Thyroid gland (tissue), 4 donors: ENCODE measurements at regions of chr3 and their contacts with region 1.

Region 1: GRCh38 chr3:49339945-49340800 is at the start of gene USP4:
- DNase-seq: peak; percentile 93 to 95
- H3K4me3 ChIP-seq: peak within 1 kb of the TSS; percentile 60 to 90 (median 86)
- H3K27ac ChIP-seq: peak within 1 kb of the TSS; percentile 85 to 98 (median 94)
- H3K4me1 ChIP-seq: peaks cover 11 to 30% of the 10 kb centered on the region in 2 donors
- H3K27me3 ChIP-seq: no peaks in the 10 kb centered on the region
- CTCF ChIP-seq: peak in 4 of 6 experiments; percentile 42 to 58 (median 50)
- POLR2A ChIP-seq: peak in 1 of 2 donors; percentile 76
- total RNA-seq, gene USP4: 19.8 to 32.6 (median 28.5) TPM

Region 2: GRCh38 chr3:49377483-49377882 is 37.3 kb after region 1 on chr3:
- intact Hi-C with region 1: no loop called
- DNase-seq: no peak
- H3K4me3 ChIP-seq: no peak overlapping the region
- H3K27ac ChIP-seq: no peak overlapping the region
- H3K4me1 ChIP-seq: peaks cover 4 to 21% of the 10 kb centered on the region in 2 donors
- H3K27me3 ChIP-seq: no peaks in the 10 kb centered on the region
- CTCF ChIP-seq: no peak
- POLR2A ChIP-seq: no peak

Region 3: DNA sequence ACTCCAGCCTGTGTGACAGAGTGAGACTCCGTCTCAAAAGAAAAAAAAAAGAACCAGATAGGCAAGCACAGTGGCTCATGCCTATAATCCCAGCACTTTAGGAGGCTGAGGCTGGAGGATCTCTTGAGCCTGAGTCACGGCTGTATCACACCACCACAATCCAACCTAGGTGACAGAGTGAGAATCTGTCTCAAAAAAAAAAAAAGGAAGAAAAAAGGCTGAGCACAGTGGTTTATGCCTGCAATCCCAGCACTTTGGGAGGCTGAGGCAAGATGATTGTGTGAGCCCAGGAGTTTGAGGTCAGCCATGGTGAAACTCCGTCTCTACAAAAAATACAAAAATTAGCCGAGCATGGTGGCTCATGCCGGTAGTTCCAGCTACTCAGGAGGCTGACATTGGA is 94.6 kb after region 1 on chr3:
- intact Hi-C with region 1: loop called (anchors 10 kb)
- DNase-seq: no peak
- H3K4me3 ChIP-seq: no peak overlapping the region
- H3K27ac ChIP-seq: no peak overlapping the region
- H3K4me1 ChIP-seq: no peaks in the 10 kb centered on the region
- H3K27me3 ChIP-seq: no peaks in the 10 kb centered on the region
- CTCF ChIP-seq: no peak
- POLR2A ChIP-seq: no peak